B cell (primary cell): ENCODE measurements at regions of chr22 and their contacts with region 1.

Region 1: GRCh38 chr22:38569972-38570778 is at the start of gene DMC1:
- DNase-seq: peak; percentile 94
- ATAC-seq: peak; percentile 98
- H3K4me3 ChIP-seq: peak within 1 kb of the TSS; percentile 71 to 93 (median 75)
- H3K4me3 Mint-ChIP-seq: peak within 1 kb of the TSS; percentile 89
- H3K27ac ChIP-seq: peak within 1 kb of the TSS; percentile 25 to 46
- H3K27ac Mint-ChIP-seq: peak within 1 kb of the TSS; percentile 70
- H3K4me1 ChIP-seq: peaks cover 14 to 18% of the 10 kb centered on the region in 2 donors
- H3K4me1 Mint-ChIP-seq: peaks cover 14% of the 10 kb centered on the region
- H3K27me3 ChIP-seq: no peaks in the 10 kb centered on the region
- H3K27me3 Mint-ChIP-seq: no peaks in the 10 kb centered on the region
- CTCF ChIP-seq: no peak
- total RNA-seq, gene DMC1: 0.22 and 0.64 TPM in 2 replicates

Region 2: DNA sequence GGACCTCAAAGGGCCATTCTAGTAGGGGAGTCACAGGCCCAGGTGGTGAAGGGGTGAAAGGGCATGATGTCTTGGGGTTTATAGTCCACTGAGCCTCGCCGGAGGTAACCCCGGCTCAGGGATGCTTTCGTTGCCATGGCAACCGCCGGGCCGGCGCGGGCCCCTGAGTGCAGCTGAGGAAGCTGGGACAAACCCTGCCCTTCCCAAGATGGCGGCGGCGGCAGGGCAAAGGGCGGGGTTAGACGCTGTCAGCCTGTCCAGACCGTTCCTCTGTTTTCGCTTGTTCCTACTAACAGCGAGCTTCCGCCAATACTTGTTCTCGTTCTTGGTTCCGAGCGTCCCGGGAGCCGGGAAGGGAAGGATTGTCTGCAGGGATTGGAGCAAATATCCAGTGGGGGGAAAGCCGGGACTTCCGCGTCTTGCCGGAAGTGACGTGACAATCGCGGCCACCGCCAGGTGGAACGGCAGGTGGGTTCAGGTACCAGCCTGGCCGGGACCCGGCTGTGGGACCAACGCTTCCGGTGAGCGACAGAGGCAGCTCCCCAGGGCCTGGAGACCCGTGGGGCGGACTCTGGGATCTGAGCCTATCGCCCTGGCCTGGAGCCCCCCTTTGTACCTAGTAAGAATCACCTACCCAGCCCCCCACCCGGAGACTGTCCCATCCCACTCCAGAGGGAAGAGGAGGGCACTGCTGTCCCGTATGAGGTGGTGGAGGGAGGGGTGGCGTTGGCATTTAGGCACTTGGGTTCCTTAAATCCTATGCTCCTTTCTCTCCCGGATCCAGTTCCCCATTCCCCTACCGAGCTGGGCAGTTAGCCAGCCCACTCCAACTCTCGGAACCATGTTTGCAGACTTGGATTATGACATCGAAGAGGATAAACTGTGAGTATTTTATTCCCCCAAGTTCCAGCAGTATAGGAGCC is 512.9 kb before region 1 on chr22 and contains the start of gene PICK1:
- CTCF ChIA-PET with region 1: interaction called, 89 read pairs
- POLR2A ChIA-PET with region 1: no interaction called
- intact Hi-C with region 1: loop called (anchors 1 kb)
- DNase-seq: peak; percentile 92
- ATAC-seq: peak; percentile 74
- H3K4me3 ChIP-seq: peak within 1 kb of the TSS; percentile 73 to 81 (median 78)
- H3K4me3 Mint-ChIP-seq: peak within 1 kb of the TSS; percentile 96
- H3K27ac ChIP-seq: peak within 1 kb of the TSS; percentile 79 to 92
- H3K27ac Mint-ChIP-seq: peak within 1 kb of the TSS; percentile 96
- H3K4me1 ChIP-seq: peaks cover 12 to 25% of the 10 kb centered on the region in 2 donors
- H3K4me1 Mint-ChIP-seq: peaks cover 18% of the 10 kb centered on the region
- H3K27me3 ChIP-seq: peaks cover 0 to 11% (median 2%) of the 10 kb centered on the region in 4 experiments
- H3K27me3 Mint-ChIP-seq: no peaks in the 10 kb centered on the region
- CTCF ChIP-seq: no peak
- total RNA-seq, gene PICK1: 30.9 and 34.2 TPM in 2 replicates

Region 3: DNA sequence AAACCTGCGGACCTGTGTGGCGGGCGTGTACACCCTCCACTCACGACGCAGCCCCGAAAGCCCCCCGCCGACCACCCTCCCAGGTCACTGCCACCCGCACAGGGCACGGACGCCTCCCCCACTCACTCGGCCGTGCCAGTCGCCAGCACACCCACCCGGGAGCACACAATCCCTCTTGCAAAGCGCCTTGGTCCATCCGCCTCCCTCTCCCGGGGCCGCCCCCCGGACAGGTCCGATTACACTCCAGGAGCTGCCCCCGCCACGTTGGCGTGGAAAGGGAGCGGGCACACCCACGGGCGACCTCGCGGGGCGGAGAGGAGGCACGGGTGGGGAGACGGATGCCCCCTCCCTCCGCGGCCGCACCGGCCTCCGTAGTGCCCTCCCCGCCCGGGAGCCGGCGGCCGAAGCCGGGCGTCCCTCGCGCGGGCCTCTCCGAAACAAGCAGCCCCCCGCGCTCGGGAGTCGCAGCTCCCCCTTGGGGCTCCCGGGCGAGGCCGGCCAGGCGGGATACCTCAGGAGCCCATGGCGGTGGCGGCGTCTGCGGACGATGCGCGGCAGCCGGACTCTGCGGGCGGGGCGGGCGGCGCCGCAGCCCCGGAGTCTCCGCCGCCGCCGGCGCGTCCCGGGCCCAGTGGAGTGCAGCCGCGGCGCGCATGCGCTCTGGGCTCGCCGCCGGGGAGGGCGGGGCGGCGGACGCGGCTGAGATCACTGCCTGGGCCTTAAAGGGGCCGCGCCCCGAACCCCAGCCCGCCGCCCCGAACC is 297.6 kb before region 1 on chr22 and contains the start of gene TMEM184B:
- CTCF ChIA-PET with region 1: interaction called, 5 read pairs
- POLR2A ChIA-PET with region 1: no interaction called
- intact Hi-C with region 1: loop called (anchors 2 kb)
- DNase-seq: peak; percentile 90
- ATAC-seq: peak; percentile 96
- H3K4me3 ChIP-seq: peak within 1 kb of the TSS; percentile 48 to 98 (median 76)
- H3K4me3 Mint-ChIP-seq: peak within 1 kb of the TSS; percentile 94
- H3K27ac ChIP-seq: peak within 1 kb of the TSS; percentile 66 to 85
- H3K27ac Mint-ChIP-seq: peak within 1 kb of the TSS; percentile 92
- H3K4me1 ChIP-seq: peaks cover 15 to 21% of the 10 kb centered on the region in 2 donors
- H3K4me1 Mint-ChIP-seq: peaks cover 38% of the 10 kb centered on the region
- H3K27me3 ChIP-seq: peaks cover 0 to 3% (median 0%) of the 10 kb centered on the region in 4 experiments
- H3K27me3 Mint-ChIP-seq: no peaks in the 10 kb centered on the region
- CTCF ChIP-seq: no peak
- total RNA-seq, gene TMEM184B: 23.5 and 24.7 TPM in 2 replicates

Region 4: DNA sequence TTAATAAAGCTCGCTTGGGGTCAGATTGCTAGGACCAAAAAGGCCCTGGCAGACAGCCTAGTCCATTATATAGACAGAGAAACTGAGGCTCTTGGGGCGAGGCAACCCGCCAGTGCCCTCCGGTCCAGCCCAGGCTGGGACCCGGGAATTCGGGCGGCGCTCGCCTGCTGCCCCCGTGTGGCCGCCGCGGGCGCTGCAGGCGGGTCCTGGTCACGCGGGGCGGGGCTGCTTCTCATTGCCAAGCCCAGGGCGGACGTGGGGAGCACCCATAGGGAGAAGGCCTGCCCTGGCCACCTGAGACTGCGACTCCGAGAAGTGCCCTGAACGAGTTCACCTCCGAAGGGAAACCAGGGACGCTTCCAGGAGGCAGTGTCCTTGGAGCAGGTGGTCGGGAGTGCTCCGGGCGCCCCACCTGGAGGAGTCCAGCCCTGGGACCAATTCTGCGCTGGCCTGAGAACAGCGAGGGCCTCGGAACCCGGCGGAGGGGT is 217.0 kb before region 1 on chr22:
- CTCF ChIA-PET with region 1: no interaction called
- POLR2A ChIA-PET with region 1: no interaction called
- intact Hi-C with region 1: loop called (anchors 5 kb)
- DNase-seq: peak; percentile 78
- ATAC-seq: peak; percentile 91
- H3K4me3 ChIP-seq: no peak overlapping the region
- H3K4me3 Mint-ChIP-seq: no peak overlapping the region
- H3K27ac ChIP-seq: peak overlapping the region in 1 of 2 donors; percentile 5
- H3K27ac Mint-ChIP-seq: no peak overlapping the region
- H3K4me1 ChIP-seq: peaks cover 0 to 6% of the 10 kb centered on the region in 2 donors
- H3K4me1 Mint-ChIP-seq: peaks cover 12% of the 10 kb centered on the region
- H3K27me3 ChIP-seq: no peaks in the 10 kb centered on the region
- H3K27me3 Mint-ChIP-seq: no peaks in the 10 kb centered on the region
- CTCF ChIP-seq: peak; percentile 97

Region 5: GRCh38 chr22:38398609-38399461 is 171.3 kb before region 1 on chr22:
- CTCF ChIA-PET with region 1: no interaction called
- POLR2A ChIA-PET with region 1: no interaction called
- intact Hi-C with region 1: loop called (anchors 2 kb)
- DNase-seq: peak; percentile 87
- ATAC-seq: peak; percentile 76
- H3K4me3 ChIP-seq: peak overlapping the region; percentile 2 to 75 (median 61)
- H3K4me3 Mint-ChIP-seq: peak overlapping the region; percentile 84
- H3K27ac ChIP-seq: peak overlapping the region; percentile 82 to 86
- H3K27ac Mint-ChIP-seq: peak overlapping the region; percentile 91
- H3K4me1 ChIP-seq: peaks cover 23 to 28% of the 10 kb centered on the region in 2 donors
- H3K4me1 Mint-ChIP-seq: peaks cover 36% of the 10 kb centered on the region
- H3K27me3 ChIP-seq: no peaks in the 10 kb centered on the region
- H3K27me3 Mint-ChIP-seq: no peaks in the 10 kb centered on the region
- CTCF ChIP-seq: no peak

Region 6: DNA sequence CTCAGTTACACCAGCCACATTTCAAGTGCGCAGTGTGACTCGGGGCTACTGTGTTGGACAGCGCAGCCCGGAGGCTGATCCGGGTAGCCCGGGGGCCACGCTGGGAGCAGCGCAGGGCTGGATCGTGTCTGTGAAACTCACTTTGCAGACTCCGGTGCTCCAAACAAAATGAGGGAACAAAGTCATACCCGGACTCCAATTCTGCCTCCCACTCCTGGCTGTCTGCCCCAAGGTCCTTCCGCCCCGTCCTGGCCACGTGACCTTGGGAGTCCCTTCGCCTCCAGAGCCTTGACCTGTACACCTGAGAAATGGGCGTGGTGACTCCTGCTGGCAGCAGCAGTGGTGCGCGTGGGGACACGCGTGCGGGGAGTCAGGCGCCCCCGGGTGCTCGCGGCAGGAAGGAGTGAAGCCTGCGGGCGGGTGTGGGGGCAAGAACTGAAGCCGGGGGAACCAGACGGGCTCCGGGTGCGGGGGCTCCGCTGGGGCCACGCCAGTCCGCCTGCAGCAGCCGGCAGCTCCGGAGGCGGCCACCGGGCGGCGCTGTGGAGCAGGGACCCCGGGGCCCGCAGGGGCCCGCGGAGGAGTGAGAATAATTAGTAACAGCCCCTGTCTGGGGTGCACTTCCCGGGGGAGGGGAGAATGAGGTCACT is 157.6 kb before region 1 on chr22:
- CTCF ChIA-PET with region 1: interaction called, 5 read pairs
- POLR2A ChIA-PET with region 1: no interaction called
- intact Hi-C with region 1: loop called (anchors 5 kb)
- DNase-seq: peak; percentile 43
- ATAC-seq: peak; percentile 54
- H3K4me3 ChIP-seq: peak overlapping the region in 1 of 5 experiments; percentile 41
- H3K4me3 Mint-ChIP-seq: peak overlapping the region; percentile 19
- H3K27ac ChIP-seq: no peak overlapping the region
- H3K27ac Mint-ChIP-seq: no peak overlapping the region
- H3K4me1 ChIP-seq: peaks cover 4 to 5% of the 10 kb centered on the region in 2 donors
- H3K4me1 Mint-ChIP-seq: peaks cover 4% of the 10 kb centered on the region
- H3K27me3 ChIP-seq: peaks cover 0 to 5% (median 0%) of the 10 kb centered on the region in 4 experiments
- H3K27me3 Mint-ChIP-seq: no peaks in the 10 kb centered on the region
- CTCF ChIP-seq: peak; percentile 82

Region 7: GRCh38 chr22:38506118-38506962 is 63.8 kb before region 1 on chr22 and contains the start of gene DDX17:
- CTCF ChIA-PET with region 1: interaction called, 5 read pairs
- POLR2A ChIA-PET with region 1: no interaction called
- intact Hi-C with region 1: loop called (anchors 1 kb)
- DNase-seq: peak; percentile 99
- ATAC-seq: peak; percentile 87
- H3K4me3 ChIP-seq: peak within 1 kb of the TSS; percentile 78 to 99 (median 93)
- H3K4me3 Mint-ChIP-seq: peak within 1 kb of the TSS; percentile 99
- H3K27ac ChIP-seq: peak within 1 kb of the TSS; percentile 98
- H3K27ac Mint-ChIP-seq: peak within 1 kb of the TSS; percentile 100
- H3K4me1 ChIP-seq: peaks cover 39 to 40% of the 10 kb centered on the region in 2 donors
- H3K4me1 Mint-ChIP-seq: peaks cover 51% of the 10 kb centered on the region
- H3K27me3 ChIP-seq: no peaks in the 10 kb centered on the region
- H3K27me3 Mint-ChIP-seq: no peaks in the 10 kb centered on the region
- CTCF ChIP-seq: no peak
- total RNA-seq, gene DDX17: 936 and 967 TPM in 2 replicates

Region 8: DNA sequence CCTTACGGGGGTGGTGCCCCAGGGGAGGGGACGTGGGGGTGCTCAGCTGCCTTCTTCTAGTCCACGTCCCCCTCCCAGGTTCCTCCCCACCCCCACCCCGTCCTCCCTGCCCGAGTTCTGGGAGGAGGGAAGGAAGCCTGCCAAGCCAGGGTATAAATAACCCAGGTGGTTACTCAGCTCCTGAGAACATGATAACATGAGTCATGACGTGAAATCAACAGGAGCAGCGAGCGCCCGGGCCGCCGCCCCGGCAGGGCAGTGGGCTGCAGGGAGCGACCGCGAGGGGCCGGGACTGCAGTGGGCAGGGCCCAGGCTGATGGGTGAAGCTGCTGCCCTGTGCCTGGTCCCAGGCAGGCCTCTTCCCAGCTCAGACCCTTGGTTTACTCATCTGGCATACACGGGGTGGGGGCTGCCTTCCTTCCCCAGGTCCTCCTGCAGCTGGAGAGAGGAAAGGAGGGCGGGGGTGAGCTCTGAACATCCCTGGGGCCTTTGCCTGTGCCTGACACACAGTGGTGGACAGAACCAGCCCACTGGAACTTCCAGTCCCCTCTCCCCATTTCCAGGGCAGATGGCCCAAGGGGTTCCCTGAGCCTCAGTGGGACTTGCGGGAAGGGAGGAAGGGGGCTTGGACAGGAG is 683.4 kb after region 1 on chr22:
- CTCF ChIA-PET with region 1: no interaction called
- POLR2A ChIA-PET with region 1: no interaction called
- intact Hi-C with region 1: no loop called
- DNase-seq: no peak
- ATAC-seq: peak; percentile 17
- H3K4me3 ChIP-seq: no peak overlapping the region
- H3K4me3 Mint-ChIP-seq: no peak overlapping the region
- H3K27ac ChIP-seq: no peak overlapping the region
- H3K27ac Mint-ChIP-seq: no peak overlapping the region
- H3K4me1 ChIP-seq: peaks cover 10 to 14% of the 10 kb centered on the region in 2 donors
- H3K4me1 Mint-ChIP-seq: peaks cover 11% of the 10 kb centered on the region
- H3K27me3 ChIP-seq: peaks cover 0 to 71% (median 31%) of the 10 kb centered on the region in 4 experiments
- H3K27me3 Mint-ChIP-seq: peaks cover 56% of the 10 kb centered on the region
- CTCF ChIP-seq: no peak